HAP-1 (cell line): ENCODE measurements at regions of chr12 and their contacts with region 1.

Region 1: GRCh38 chr12:6867413-6868210 is at the start of gene TPI1:
- DNase-seq: peak; percentile 71 to 88
- H3K4me3 ChIP-seq: peak within 1 kb of the TSS; percentile 92
- H3K4me1 ChIP-seq: peaks cover 23% of the 10 kb centered on the region
- H3K27me3 ChIP-seq: no peaks in the 10 kb centered on the region

Region 2: GRCh38 chr12:6944381-6945186 is 77.0 kb after region 1 on chr12:
- in situ Hi-C with region 1: loop called (anchors 5 kb)
- DNase-seq: peak; percentile 93 to 95
- H3K4me3 ChIP-seq: peak overlapping the region; percentile 50
- H3K4me1 ChIP-seq: peaks cover 16% of the 10 kb centered on the region
- H3K27me3 ChIP-seq: no peaks in the 10 kb centered on the region

Region 3: GRCh38 chr12:7122811-7123769 is 255.5 kb after region 1 on chr12:
- in situ Hi-C with region 1: no loop called
- DNase-seq: no peak
- H3K4me3 ChIP-seq: no peak overlapping the region
- H3K4me1 ChIP-seq: no peaks in the 10 kb centered on the region
- H3K27me3 ChIP-seq: no peaks in the 10 kb centered on the region

Region 4: GRCh38 chr12:7176595-7176994 is 309.0 kb after region 1 on chr12:
- in situ Hi-C with region 1: no loop called
- DNase-seq: no peak
- H3K4me3 ChIP-seq: no peak overlapping the region
- H3K4me1 ChIP-seq: no peaks in the 10 kb centered on the region
- H3K27me3 ChIP-seq: no peaks in the 10 kb centered on the region; the same call in 1 of the 2 replicates

Region 5: DNA sequence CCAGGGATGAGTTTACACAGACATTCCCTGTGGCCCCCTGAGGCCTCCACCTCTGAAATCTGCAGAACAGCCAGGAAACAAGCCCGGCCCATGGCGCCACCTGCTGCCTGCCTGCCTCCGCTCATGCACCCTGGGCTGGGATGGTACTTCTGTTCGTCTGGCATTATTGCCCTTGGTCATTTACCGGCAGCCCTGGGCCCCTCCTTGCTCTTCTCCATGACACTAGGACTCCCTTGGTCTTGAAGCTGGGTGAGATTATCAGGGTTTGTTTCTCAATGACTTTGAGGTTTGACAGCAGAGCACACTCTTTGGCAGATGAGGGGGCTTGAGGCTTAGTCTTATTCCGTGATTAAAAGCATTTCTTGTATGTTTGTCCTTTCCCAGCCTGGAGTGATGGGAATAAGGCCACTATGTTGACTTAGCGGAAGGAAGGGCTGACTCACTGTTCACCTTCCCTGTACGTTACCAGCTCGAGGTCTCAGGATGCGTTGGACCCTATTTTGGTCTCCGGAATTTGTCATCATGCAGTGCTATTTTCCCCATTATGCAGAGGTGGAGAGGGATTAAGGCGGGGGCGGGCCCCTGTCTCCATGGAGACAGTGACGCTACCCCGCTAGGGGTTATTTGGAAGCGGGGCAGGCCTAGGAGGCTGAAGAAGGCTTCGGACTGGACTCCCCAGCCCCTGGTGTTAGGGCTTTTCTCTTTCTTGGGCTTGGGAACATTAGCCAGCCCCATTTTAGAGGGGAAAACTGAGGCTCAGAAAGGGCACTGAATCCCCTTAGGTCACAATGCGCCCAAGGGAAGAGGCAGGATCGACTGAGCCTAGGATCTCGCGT is 321.2 kb after region 1 on chr12:
- in situ Hi-C with region 1: no loop called
- DNase-seq: peak; percentile 49 to 84
- H3K4me3 ChIP-seq: peak overlapping the region; percentile 33
- H3K4me1 ChIP-seq: peaks cover 5% of the 10 kb centered on the region; the same call in 1 of the 2 replicates
- H3K27me3 ChIP-seq: no peaks in the 10 kb centered on the region

Region 6: DNA sequence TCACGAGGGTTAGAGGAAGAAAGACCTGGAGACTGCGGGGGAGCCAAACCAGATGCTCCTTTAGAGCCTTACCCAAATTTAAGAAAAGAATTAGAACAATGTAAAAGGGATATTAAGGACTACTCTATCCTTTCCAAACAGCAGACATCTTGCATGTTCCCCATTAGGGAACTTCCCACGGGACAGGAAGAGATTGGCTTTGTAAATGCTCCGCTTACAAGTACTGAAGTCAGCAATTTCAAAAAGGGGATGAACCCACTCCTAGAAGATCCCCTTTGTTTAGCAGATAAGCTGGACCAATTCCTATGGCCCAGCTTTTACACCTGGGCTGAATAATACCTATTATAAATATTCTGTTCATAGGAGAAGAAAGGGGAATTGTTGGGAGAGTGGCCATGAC is 723.9 kb after region 1 on chr12:
- in situ Hi-C with region 1: no loop called
- DNase-seq: no peak
- H3K4me3 ChIP-seq: no peak overlapping the region
- H3K4me1 ChIP-seq: no peaks in the 10 kb centered on the region
- H3K27me3 ChIP-seq: no peaks in the 10 kb centered on the region